Activated T-helper 2 cell treated with anti-CD3 and anti-CD28 coated beads, Interferon-gamma antibody, Interleukin-2, Interleukin-4, amounts not matched to agents 10 μg/mL and 5 μg/mL and 100 μg/mL, durations not matched to agents 14 hours and 24 hours and 36 hours (primary cell): ENCODE measurements at regions of chr4 and their contacts with region 1.

Region 1: DNA sequence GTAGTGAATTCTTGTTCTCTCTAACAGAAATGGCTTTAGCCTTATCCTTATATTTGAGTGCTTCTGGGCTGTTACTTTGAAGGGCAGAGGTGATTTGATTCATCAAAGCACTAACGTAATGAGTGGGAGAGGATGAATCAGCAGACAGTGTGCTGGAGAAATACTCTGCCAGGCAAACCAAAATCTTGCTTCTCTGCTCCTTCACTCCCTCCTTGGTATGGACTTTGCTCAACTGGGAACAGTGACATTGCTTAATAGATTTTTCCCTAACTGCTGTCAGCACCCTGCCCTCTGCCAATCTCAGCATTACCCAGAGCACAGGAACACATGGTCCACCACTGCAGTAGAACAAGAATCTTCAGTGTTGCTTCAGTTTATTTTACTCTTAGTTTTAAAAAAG is 56.0 kb downstream of the PDLIM5 start:
- DNase-seq: no peak
- H3K4me3 Mint-ChIP-seq: no peak overlapping the region
- H3K27ac Mint-ChIP-seq: no peak overlapping the region
- H3K4me1 Mint-ChIP-seq: peaks cover 11% of the 10 kb centered on the region
- H3K27me3 Mint-ChIP-seq: no peaks in the 10 kb centered on the region

Region 2: GRCh38 chr4:93568758-93569157 is 939.0 kb before region 1 on chr4:
- intact Hi-C with region 1: no loop called
- DNase-seq: no peak
- H3K4me3 Mint-ChIP-seq: no peak overlapping the region
- H3K27ac Mint-ChIP-seq: no peak overlapping the region
- H3K4me1 Mint-ChIP-seq: no peaks in the 10 kb centered on the region
- H3K27me3 Mint-ChIP-seq: no peaks in the 10 kb centered on the region

Region 3: GRCh38 chr4:94451695-94452475 is 55.8 kb before region 1 on chr4 and contains the start of gene PDLIM5:
- intact Hi-C with region 1: loop called (anchors 5 kb)
- DNase-seq: peak; percentile 86
- H3K4me3 Mint-ChIP-seq: peak within 1 kb of the TSS; percentile 86
- H3K27ac Mint-ChIP-seq: peak within 1 kb of the TSS; percentile 53
- H3K4me1 Mint-ChIP-seq: peaks cover 18% of the 10 kb centered on the region
- H3K27me3 Mint-ChIP-seq: peaks cover 36% of the 10 kb centered on the region
- total RNA-seq, gene PDLIM5: 24.2 and 25.1 TPM in 2 replicates

Region 4: GRCh38 chr4:94488662-94489061 is 19.0 kb before region 1 on chr4:
- intact Hi-C with region 1: no loop called
- DNase-seq: no peak
- H3K4me3 Mint-ChIP-seq: no peak overlapping the region
- H3K27ac Mint-ChIP-seq: no peak overlapping the region
- H3K4me1 Mint-ChIP-seq: peaks cover 6% of the 10 kb centered on the region
- H3K27me3 Mint-ChIP-seq: no peaks in the 10 kb centered on the region